ENCODE measurements at regions of chr2 and their contacts with region 1.

Region 1: DNA sequence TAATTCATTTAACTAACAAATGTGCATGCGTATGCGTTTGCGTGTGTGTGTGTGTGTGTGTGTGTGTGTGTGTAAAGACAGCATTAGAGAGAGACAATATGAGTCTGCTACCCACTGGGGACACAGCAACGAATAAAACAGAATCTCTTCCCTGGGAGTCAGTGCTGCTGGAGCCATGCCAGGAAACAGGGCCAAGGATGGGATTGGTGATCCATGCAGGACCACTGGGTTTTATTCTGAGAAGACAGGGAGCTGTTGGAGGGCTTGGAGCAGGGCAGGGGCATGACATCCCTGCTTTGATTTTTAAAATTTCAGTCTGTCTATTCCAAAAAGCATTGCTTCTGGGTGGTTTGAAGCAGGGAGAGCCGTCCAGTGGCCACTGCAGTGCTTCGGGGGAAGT is 62.9 kb downstream of the PDCL3 start:
- DNase-seq: no peak
- H3K4me3 ChIP-seq: no peak overlapping the region
- H3K27ac ChIP-seq: no peak overlapping the region
- H3K4me1 ChIP-seq: no peaks in the 10 kb centered on the region
- H3K27me3 ChIP-seq: no peaks in the 10 kb centered on the region
- CTCF ChIP-seq: no peak

Region 2: GRCh38 chr2:99554238-99554637 is 1071.5 kb before region 1 on chr2:
- intact Hi-C with region 1: no loop called
- DNase-seq: no peak
- H3K4me3 ChIP-seq: no peak overlapping the region
- H3K27ac ChIP-seq: no peak overlapping the region
- H3K4me1 ChIP-seq: no peaks in the 10 kb centered on the region
- H3K27me3 ChIP-seq: no peaks in the 10 kb centered on the region
- CTCF ChIP-seq: no peak

Region 3: GRCh38 chr2:99881901-99882591 is 743.7 kb before region 1 on chr2:
- intact Hi-C with region 1: no loop called
- DNase-seq: no peak
- H3K4me3 ChIP-seq: no peak overlapping the region
- H3K27ac ChIP-seq: no peak overlapping the region
- H3K4me1 ChIP-seq: peaks cover 0 to 13% of the 10 kb centered on the region in 2 donors
- H3K27me3 ChIP-seq: no peaks in the 10 kb centered on the region
- CTCF ChIP-seq: no peak

Region 4: DNA sequence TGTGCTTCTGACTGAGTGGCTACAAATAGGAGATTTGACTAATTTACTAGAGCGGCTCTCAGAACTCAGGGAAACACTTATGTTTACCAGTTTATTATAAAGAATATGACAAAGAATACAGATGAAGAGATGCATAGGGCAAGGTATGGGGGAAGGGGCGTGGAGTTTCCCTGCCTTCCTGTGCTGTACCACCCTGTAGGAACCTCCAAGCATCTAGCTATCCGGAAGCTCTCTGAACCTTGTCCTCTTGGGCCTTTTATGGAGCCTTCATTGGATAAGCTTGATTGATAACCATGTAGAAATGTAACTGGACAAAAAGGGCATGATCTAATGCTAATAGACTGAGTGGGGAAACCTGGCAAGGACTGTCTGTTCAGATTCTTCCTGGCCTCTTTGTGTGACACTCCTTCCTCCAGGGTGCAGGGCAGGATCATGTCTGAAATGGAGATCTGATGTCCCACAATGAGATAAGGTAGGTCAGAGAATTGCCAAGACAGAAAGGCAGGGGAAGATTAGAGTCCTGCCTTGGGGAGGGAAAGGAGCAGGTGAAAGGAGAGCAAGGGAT is 92.4 kb after region 1 on chr2:
- intact Hi-C with region 1: loop called (anchors 10 kb)
- DNase-seq: no peak
- H3K4me3 ChIP-seq: no peak overlapping the region
- H3K27ac ChIP-seq: no peak overlapping the region
- H3K4me1 ChIP-seq: no peaks in the 10 kb centered on the region
- H3K27me3 ChIP-seq: no peaks in the 10 kb centered on the region
- CTCF ChIP-seq: no peak